ENCODE measurements at regions of chr19 and their contacts with region 1.

Region 1: GRCh38 chr19:45643024-45643926 is 4.1 kb upstream of the EML2 start:
- DNase-seq: peak; percentile 92
- ATAC-seq: peak; percentile 41
- H3K4me3 Mint-ChIP-seq: peak overlapping the region; percentile 80
- H3K27ac Mint-ChIP-seq: peak overlapping the region; percentile 97
- H3K4me1 Mint-ChIP-seq: peaks cover 50% of the 10 kb centered on the region
- H3K27me3 Mint-ChIP-seq: no peaks in the 10 kb centered on the region
- CTCF ChIP-seq: no peak

Region 2: DNA sequence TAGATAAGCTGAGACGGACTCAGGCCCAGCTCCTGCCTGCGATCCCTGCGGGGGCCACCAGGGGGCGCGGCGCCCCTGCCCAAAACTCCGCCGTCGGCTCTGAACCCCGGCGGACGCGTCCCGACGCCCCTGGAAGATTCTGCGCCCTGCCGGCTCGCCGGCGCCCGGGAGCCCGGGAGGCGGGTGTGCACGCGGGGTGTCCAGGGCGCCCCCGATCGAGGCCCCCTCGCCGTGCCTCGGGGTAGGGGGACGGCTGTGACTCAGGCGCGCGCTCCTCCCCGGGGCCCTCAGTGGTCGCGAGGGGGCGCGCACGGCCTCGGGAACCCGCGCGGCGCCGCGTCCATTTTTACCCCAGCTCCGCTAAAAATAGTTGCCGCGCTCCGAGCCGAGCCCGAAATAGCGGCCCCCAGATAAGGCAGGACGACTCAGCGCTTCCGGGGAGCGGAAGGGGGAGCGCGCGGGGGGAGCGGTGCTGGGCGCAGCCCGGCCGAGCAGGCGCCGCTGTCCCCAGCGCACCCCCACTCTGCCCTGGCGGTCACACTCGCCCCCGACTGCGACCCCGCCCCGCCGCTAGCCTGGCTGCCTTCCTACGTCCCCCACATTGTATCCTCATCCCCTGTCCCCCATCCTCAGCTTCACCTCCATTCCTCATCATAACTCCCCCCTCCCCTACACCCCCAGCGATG is 203.6 kb before region 1 on chr19:
- CTCF ChIA-PET with region 1: interaction called, 19 read pairs
- POLR2A ChIA-PET with region 1: interaction called, 7 read pairs
- intact Hi-C with region 1: loop called (anchors 1 kb)
- DNase-seq: peak; percentile 94
- ATAC-seq: peak; percentile 40
- H3K4me3 Mint-ChIP-seq: peak overlapping the region; percentile 72
- H3K27ac Mint-ChIP-seq: peak overlapping the region; percentile 75
- H3K4me1 Mint-ChIP-seq: peaks cover 37% of the 10 kb centered on the region
- H3K27me3 Mint-ChIP-seq: no peaks in the 10 kb centered on the region
- CTCF ChIP-seq: peak; percentile 98

Region 3: DNA sequence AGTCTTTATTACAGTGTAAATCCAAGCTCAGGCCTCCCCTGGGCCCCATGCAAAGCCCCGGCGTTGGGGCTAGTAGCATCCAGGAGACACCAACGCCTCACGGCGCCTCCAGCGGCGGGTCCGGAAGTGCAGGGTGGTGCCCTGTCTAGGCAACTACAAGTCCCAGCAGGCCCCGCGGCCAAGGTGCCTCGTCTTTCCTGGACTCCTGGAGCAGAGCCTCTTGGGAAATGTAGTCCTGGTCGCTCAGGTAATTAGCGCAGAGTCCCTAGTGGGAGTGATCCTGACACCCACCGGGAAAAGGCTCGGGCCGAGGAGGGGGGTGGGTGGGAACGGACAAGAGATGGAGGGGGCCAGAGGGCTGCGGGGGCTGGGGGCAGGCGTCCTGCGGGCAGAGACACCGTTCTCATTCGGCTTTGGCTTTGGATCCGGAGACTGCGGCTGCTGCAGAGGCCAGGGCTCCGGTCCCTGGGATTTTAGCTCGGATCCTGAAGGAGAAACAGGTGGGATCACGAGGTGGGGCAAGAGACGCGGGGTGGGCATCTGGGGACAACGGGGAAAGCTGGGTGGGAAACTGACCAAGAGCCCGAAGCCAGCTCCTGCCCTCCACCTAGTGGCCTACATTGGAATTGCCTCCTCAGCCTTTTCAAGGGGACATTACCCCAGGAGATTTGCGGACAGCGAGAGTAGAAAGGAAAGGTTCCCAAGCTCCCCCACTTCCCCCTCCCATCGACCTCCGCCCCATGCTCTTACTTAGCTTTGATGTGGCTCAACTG is 157.8 kb before region 1 on chr19:
- CTCF ChIA-PET with region 1: interaction called, 11 read pairs
- POLR2A ChIA-PET with region 1: no interaction called
- intact Hi-C with region 1: no loop called
- DNase-seq: peak; percentile 96
- ATAC-seq: peak; percentile 99
- H3K4me3 Mint-ChIP-seq: peak overlapping the region; percentile 91
- H3K27ac Mint-ChIP-seq: peak overlapping the region; percentile 74
- H3K4me1 Mint-ChIP-seq: peaks cover 8% of the 10 kb centered on the region
- H3K27me3 Mint-ChIP-seq: peaks cover 3% of the 10 kb centered on the region
- CTCF ChIP-seq: peak; percentile 84

Region 4: DNA sequence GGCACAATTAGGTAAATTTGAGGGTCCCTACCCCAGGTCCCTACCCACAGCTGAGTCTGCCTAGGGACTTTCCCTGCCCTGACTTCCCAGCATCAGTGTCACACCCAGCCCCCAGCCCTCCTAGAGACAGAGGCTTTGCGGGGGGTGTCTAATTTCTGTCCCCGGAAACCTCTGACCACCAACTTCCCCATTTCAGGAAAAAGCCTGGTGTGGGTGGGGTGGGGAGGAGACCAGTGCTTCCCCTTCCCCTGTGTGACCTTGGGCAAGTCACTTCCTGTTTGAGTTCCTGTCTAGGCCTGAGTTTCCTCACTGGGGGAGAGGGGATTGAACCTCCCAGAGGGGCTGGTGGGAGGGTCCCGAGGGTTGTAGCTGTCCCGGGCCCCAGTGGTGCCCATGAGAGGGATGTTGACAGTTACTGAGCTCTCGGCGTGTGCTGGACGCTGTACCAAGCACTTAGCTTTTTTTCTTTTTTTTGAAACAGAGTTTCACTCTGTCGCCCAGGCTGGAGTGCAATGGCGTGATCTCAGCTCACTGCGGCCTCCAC is 128.1 kb before region 1 on chr19:
- CTCF ChIA-PET with region 1: interaction called, 4 read pairs
- POLR2A ChIA-PET with region 1: interaction called, 22 read pairs
- intact Hi-C with region 1: no loop called
- DNase-seq: peak; percentile 62
- ATAC-seq: peak; percentile 79
- H3K4me3 Mint-ChIP-seq: peak overlapping the region; percentile 67
- H3K27ac Mint-ChIP-seq: peak overlapping the region; percentile 92
- H3K4me1 Mint-ChIP-seq: peaks cover 67% of the 10 kb centered on the region
- H3K27me3 Mint-ChIP-seq: no peaks in the 10 kb centered on the region
- CTCF ChIP-seq: no peak

Region 5: DNA sequence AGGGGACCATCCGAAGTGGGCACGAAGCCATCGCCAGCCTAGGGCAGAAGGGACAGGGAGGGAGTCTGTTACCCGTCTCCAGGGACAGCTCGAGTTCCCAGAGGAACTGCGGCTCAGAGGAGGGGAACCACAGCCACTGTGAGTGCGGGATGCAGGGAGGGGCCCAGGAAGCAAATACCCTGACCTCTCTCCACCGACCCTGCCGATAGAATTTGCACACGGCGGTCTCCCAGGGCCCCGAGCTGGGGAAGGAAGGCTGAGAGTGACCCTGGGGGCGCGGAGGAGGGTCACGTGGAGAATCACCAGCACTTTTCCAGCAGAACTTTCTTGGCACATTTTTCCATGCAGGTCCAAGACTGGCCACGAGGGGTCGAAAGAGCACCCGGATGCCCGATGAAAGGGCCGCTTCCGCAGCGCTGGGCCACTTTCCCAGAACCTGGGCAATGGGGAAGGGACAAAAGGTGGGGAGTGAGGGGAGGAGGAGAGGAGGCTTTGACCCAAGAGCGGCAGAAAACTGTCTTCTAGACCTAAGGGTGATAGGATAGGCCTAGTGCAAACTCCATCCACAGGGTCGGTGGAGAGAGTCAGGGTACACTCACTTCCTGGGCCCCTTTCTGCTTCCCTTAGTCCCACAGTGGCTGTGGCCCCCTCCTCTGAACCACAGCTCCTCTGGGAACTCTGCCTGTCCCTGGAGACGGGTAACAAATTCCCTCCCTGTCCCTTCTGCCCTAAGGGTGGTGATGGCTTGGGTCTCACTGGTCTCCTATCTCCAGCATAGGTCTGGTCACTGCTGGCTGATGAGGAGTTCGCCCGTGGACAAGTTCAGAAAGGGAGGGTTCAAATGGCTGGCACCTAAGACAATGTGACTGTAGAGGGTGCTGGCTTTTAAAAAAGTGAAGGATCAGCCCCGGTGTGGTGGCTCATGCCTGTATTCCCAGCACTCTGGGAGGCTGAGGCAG is 35.9 kb before region 1 on chr19:
- CTCF ChIA-PET with region 1: interaction called, 32 read pairs
- POLR2A ChIA-PET with region 1: interaction called, 4 read pairs
- intact Hi-C with region 1: loop called (anchors 1 kb)
- DNase-seq: peak; percentile 40
- ATAC-seq: peak; percentile 61
- H3K4me3 Mint-ChIP-seq: peak overlapping the region; percentile 24
- H3K27ac Mint-ChIP-seq: peak overlapping the region; percentile 24
- H3K4me1 Mint-ChIP-seq: peaks cover 11% of the 10 kb centered on the region
- H3K27me3 Mint-ChIP-seq: peaks cover 10% of the 10 kb centered on the region
- CTCF ChIP-seq: no peak

Region 6: GRCh38 chr19:45670670-45671453 is 27.6 kb after region 1 on chr19:
- CTCF ChIA-PET with region 1: interaction called, 5 read pairs
- POLR2A ChIA-PET with region 1: interaction called, 10 read pairs
- intact Hi-C with region 1: loop called (anchors 1 kb)
- DNase-seq: peak; percentile 47
- ATAC-seq: peak; percentile 61
- H3K4me3 Mint-ChIP-seq: peak overlapping the region; percentile 52
- H3K27ac Mint-ChIP-seq: no peak overlapping the region
- H3K4me1 Mint-ChIP-seq: peaks cover 32% of the 10 kb centered on the region
- H3K27me3 Mint-ChIP-seq: peaks cover 27% of the 10 kb centered on the region
- CTCF ChIP-seq: no peak

Region 7: DNA sequence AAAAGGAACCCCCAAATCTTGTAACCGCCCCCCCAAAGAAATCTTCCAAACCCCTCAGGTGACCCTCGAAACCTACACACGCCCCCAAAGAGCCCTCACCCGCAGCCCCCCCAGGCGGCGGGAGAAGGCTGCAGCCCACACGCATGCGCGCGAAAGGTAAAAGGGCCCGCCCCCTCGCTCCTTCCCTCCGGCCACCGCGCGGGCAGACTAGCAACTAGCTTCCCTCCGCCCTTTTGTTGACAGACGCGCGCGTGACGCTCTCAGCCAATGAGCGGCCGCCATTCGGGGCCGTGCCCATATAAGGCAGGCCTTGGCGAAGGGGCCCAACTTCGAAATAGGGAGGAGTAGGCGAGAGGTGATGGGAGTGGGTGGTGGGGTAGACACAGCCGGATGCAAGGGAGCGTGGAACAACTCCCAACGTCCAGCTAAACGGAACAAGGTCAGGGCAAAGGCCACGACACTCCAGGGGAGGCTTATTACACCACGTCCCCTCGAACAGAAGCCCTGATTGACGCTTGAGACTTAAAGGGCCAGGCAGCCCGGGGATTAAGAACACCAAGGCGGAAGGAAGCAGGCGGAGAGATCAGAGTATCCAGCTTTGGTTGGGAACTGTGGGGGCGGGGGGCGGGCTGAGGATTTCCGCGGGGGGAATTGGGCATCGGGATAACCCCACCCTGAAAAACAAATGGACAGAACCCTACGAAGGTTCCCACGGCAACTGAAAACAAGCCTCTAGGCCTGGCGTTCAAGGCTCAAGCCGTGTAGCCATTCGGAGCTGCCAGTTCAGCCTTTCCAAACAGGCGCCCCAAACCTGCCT is 74.1 kb after region 1 on chr19:
- CTCF ChIA-PET with region 1: interaction called, 5 read pairs
- POLR2A ChIA-PET with region 1: interaction called, 10 read pairs
- intact Hi-C with region 1: no loop called
- DNase-seq: peak; percentile 92
- ATAC-seq: peak; percentile 95
- H3K4me3 Mint-ChIP-seq: peak overlapping the region; percentile 96
- H3K27ac Mint-ChIP-seq: peak overlapping the region; percentile 92
- H3K4me1 Mint-ChIP-seq: peaks cover 35% of the 10 kb centered on the region
- H3K27me3 Mint-ChIP-seq: no peaks in the 10 kb centered on the region
- CTCF ChIP-seq: no peak

Region 8: DNA sequence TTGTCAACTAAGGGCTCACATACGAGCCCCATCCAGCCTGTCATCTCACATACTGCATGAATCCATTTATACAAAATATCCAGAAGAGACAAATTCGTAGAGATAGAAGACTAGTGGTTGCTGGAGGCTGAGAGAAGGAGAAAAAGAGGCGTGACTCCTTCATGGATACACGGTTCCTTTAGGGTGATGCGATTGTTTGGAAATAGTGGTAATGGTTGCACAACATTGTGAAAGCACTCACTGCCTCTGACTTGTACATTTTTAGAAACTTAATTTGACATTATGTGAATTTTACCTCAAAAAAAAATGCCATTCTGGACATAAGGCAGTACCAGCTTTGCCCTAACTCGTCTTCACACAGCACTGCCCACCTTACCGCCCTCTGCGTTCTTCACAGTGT is 613.6 kb after region 1 on chr19:
- CTCF ChIA-PET with region 1: no interaction called
- POLR2A ChIA-PET with region 1: no interaction called
- intact Hi-C with region 1: no loop called
- DNase-seq: no peak
- ATAC-seq: no peak
- H3K4me3 Mint-ChIP-seq: no peak overlapping the region
- H3K27ac Mint-ChIP-seq: no peak overlapping the region
- H3K4me1 Mint-ChIP-seq: no peaks in the 10 kb centered on the region
- H3K27me3 Mint-ChIP-seq: peaks cover 32% of the 10 kb centered on the region
- CTCF ChIP-seq: no peak